ENCODE measurements at regions of chr11 and their contacts with region 1.

Region 1: GRCh38 chr11:94519478-94520084 is 7.3 kb downstream of the C11orf97 start:
- DNase-seq: no peak
- H3K4me3 ChIP-seq: no peak overlapping the region
- H3K27ac ChIP-seq: no peak overlapping the region
- H3K4me1 ChIP-seq: no peaks in the 10 kb centered on the region
- H3K27me3 ChIP-seq: no peaks in the 10 kb centered on the region
- CTCF ChIP-seq: peak; percentile 28 to 69 (median 62)
- POLR2A ChIP-seq: no peak

Region 2: GRCh38 chr11:94472916-94473799 is 46.4 kb before region 1 on chr11:
- intact Hi-C with region 1: no loop called
- DNase-seq: no peak
- H3K4me3 ChIP-seq: no peak overlapping the region
- H3K27ac ChIP-seq: no peak overlapping the region
- H3K4me1 ChIP-seq: no peaks in the 10 kb centered on the region
- H3K27me3 ChIP-seq: no peaks in the 10 kb centered on the region
- CTCF ChIP-seq: no peak
- POLR2A ChIP-seq: no peak

Region 3: DNA sequence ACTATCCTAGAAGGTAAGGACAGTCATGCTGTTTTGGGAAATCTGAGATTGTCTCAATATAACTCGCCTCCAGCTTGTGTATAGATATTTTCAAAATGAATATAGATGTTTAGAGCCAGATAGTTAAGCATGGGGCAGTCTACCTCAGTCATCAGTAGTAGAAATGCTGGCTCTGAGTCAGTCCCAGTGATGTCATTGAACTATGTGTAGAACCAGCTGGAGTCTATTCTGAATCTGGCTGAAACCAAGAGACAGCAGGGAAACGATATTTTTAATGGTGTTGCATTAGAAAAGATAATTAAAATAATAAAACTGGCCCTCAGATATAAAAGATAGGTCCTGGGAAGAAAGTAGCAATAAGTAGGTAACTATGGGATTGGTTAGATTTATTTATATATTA is 73.4 kb after region 1 on chr11:
- intact Hi-C with region 1: loop called (anchors 10 kb)
- DNase-seq: no peak
- H3K4me3 ChIP-seq: no peak overlapping the region
- H3K27ac ChIP-seq: no peak overlapping the region
- H3K4me1 ChIP-seq: no peaks in the 10 kb centered on the region
- H3K27me3 ChIP-seq: no peaks in the 10 kb centered on the region
- CTCF ChIP-seq: no peak
- POLR2A ChIP-seq: no peak

Region 4: DNA sequence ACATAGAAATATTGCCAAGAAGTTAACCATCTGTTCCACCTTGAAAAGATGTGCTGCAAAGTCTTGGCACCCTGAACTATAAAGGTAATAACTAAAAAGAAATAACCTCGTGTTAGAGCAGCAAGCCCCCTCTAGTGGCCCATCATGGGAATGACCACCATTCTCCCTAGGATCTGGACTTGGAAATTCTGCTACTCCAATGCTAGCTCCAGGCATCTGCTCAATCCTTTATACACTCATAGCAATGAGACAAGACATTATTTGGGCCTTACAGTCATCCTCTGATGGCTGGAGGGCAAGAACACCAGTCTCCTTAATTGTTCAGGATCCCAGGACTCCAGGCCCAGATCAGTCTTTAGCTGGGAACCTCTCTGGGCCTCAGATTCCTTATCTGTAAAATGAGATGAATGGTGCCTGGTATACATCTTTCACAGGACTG is 377.8 kb after region 1 on chr11:
- intact Hi-C with region 1: loop called (anchors 10 kb)
- DNase-seq: peak; percentile 23
- H3K4me3 ChIP-seq: no peak overlapping the region
- H3K27ac ChIP-seq: no peak overlapping the region
- H3K4me1 ChIP-seq: no peaks in the 10 kb centered on the region
- H3K27me3 ChIP-seq: no peaks in the 10 kb centered on the region
- CTCF ChIP-seq: peak; percentile 71 to 86 (median 80)
- POLR2A ChIP-seq: no peak